ENCODE measurements at regions of chr13 and their contacts with region 1.

Region 1: DNA sequence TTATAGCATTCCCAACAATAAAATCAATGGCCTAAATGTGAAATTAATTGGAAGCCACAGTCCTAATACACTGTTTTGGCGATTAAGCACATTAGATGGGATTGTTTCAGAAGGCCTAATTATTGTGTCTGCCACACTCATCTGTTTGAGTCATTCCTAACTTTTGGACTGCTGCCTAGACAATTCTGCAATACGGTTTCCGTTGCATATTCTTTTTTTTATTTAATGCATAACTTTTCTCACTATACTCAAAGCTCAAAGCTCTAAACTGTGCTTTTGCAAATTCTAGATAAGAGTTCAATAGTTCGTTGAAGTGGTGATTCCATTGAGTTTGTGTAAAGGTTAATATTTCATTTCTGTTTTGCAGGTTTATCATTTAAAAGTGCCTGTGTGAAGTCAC is 53.1 kb downstream of the MBNL2 start:
- DNase-seq: no peak
- H3K4me3 ChIP-seq: no peak overlapping the region
- H3K27ac ChIP-seq: peak overlapping the region; percentile 65
- H3K4me1 ChIP-seq: peaks cover 99% of the 10 kb centered on the region
- H3K27me3 ChIP-seq: no peaks in the 10 kb centered on the region
- CTCF ChIP-seq: no peak

Region 2: DNA sequence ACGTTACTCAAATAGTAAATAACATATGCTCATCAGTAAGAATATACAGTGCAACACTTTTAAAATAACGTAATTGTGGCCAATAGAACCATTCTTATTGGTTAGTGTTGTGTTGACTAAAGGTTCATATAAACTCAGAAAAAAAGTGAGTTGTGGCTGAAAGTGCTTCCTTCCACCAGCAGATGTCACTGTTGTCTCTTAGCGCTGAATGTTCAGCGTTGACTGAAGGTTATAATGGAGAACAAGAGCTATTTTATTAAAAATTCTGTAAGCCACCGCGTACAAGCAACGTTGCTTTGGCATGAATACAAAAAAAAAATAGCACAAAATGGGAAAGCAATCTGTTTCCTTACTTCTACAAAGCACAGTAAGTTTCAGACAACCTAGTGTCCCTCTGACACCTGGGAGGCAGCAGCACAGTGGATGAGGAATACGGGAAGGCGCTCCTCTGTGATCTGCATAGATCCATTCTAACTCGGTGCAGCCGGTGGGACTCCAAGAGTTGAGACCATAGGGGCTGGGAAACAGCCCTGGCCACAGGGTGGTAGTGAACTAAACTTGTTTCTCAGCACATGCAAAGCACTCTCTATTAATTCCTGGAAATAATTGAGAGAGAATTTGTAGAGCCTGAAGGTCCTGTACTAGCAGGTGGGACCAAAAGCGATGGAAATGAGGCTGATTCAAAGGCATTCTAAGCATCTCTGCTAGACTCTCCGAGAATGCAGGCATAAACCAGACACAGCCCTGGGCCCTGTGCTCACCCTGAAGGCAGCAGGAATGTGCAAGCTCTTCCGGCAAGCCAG is 257.0 kb before region 1 on chr13:
- intact Hi-C with region 1: no loop called
- DNase-seq: no peak
- H3K4me3 ChIP-seq: peak overlapping the region; percentile 15
- H3K27ac ChIP-seq: no peak overlapping the region
- H3K4me1 ChIP-seq: peaks cover 5% of the 10 kb centered on the region
- H3K27me3 ChIP-seq: peaks cover 24% of the 10 kb centered on the region
- CTCF ChIP-seq: peak; percentile 95

Region 3: GRCh38 chr13:97221989-97222700 is 53.1 kb before region 1 on chr13 and contains the start of gene MBNL2:
- intact Hi-C with region 1: loop called (anchors 10 kb)
- DNase-seq: peak; percentile 89
- H3K4me3 ChIP-seq: peak within 1 kb of the TSS; percentile 74
- H3K27ac ChIP-seq: peak within 1 kb of the TSS; percentile 95
- H3K4me1 ChIP-seq: peaks cover 51% of the 10 kb centered on the region
- H3K27me3 ChIP-seq: no peaks in the 10 kb centered on the region
- CTCF ChIP-seq: no peak
- total RNA-seq, gene MBNL2: 76.5 TPM

Region 4: GRCh38 chr13:97492257-97492656 is 217.0 kb after region 1 on chr13:
- intact Hi-C with region 1: no loop called
- DNase-seq: no peak
- H3K4me3 ChIP-seq: no peak overlapping the region
- H3K27ac ChIP-seq: no peak overlapping the region
- H3K4me1 ChIP-seq: no peaks in the 10 kb centered on the region
- H3K27me3 ChIP-seq: no peaks in the 10 kb centered on the region
- CTCF ChIP-seq: no peak

Measured in left ventricle myocardium inferior (tissue), 1 donor.